Activated T-helper 1 cell treated with anti-CD3 and anti-CD28 coated beads, Interleukin-12 subunit alpha, Interleukin-12 subunit beta, Interleukin-2, Interleukin-4 antibody, amounts not matched to agents 30 ng/mL and 10 ng/mL and 1 ng/mL, durations not matched to agents 14 hours and 24 hours and 36 hours (primary cell): ENCODE measurements at regions of chr17 and their contacts with region 1.

Region 1: GRCh38 chr17:50200457-50201275 is 765 bp downstream of the COL1A1 start:
- DNase-seq: peak; percentile 74
- H3K4me3 Mint-ChIP-seq: peak overlapping the region; percentile 77
- H3K27ac Mint-ChIP-seq: peak overlapping the region; percentile 79
- H3K4me1 Mint-ChIP-seq: peaks cover 17% of the 10 kb centered on the region
- H3K27me3 Mint-ChIP-seq: peaks cover 70% of the 10 kb centered on the region

Region 2: DNA sequence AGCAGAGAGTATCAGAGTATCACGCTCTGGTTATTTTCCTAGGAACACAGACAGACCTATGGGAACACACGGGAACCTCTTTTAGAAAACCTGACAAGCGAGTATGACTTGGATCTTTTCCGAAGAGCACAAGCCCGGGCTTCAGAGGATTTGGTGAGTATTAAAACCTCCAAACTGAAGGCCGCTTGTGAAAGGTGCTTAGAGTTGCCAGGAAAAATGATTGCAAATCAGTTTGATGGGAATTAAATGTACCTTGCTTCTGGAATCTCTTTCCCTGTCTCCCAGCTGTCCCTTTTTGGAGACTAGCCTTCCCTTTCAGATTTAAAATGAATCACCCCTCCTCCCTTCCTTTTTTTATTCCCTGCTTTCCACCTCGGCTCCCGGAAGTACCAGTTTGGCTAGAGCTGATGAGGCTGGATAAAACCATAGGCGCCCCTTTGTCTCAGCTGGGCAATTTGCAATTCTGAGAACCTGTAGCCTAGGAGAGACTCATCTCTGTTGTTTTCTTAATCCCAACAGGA is 384.8 kb before region 1 on chr17:
- intact Hi-C with region 1: no loop called
- DNase-seq: no peak
- H3K4me3 Mint-ChIP-seq: no peak overlapping the region
- H3K27ac Mint-ChIP-seq: peak overlapping the region; percentile 44
- H3K4me1 Mint-ChIP-seq: peaks cover 58% of the 10 kb centered on the region
- H3K27me3 Mint-ChIP-seq: no peaks in the 10 kb centered on the region

Region 3: DNA sequence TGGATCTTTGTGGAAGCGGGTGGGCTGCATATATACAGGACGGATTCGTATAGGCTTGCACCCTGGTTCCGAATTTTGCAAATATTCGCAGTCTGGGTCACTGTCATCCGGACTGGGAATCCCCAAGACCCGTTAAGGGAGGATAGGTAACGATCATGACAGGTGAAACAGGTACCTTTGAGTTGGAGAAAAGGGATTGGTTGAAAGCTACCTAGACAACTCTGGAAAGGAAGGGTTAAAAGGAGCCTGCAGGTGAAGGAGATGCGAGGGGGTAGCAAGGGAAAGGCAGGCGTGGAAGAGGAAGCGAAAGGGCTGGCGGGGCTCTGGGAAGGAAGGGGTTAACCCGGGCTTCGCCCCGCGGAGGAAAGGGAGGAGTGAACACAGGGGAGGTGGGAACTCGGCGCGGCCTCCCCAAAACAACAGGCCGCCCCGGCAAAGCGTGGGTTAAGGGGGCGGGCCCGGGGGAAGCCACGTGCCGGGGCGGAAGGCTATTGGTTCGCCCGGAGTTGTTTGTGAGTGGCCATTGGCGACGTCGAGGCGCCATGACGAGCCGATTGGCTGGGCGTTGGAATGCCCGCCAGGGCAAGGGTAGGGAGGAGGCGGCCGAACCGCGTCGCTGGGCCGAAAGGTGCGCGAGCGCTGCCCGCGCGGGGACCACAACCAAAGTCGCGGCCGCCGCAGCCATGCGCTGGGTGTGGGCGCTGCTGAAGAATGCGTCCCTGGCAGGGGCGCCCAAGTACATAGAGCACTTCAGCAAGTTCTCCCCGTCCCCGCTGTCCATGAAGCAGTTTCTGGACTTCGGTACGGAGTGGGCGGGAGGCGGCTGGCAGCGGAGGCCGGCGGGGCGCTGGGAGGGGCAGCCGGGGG is 105.7 kb before region 1 on chr17 and contains the start of gene PDK2:
- intact Hi-C with region 1: loop called (anchors 1 kb)
- DNase-seq: peak; percentile 97
- H3K4me3 Mint-ChIP-seq: peak within 1 kb of the TSS; percentile 85
- H3K27ac Mint-ChIP-seq: peak within 1 kb of the TSS; percentile 88
- H3K4me1 Mint-ChIP-seq: peaks cover 23% of the 10 kb centered on the region
- H3K27me3 Mint-ChIP-seq: peaks cover 2% of the 10 kb centered on the region
- total RNA-seq, gene PDK2: 13.7 and 16.9 TPM in 2 replicates

Region 4: GRCh38 chr17:50139950-50140871 is 60.5 kb before region 1 on chr17:
- intact Hi-C with region 1: loop called (anchors 2 kb)
- DNase-seq: peak; percentile 74
- H3K4me3 Mint-ChIP-seq: peak overlapping the region; percentile 72
- H3K27ac Mint-ChIP-seq: peak overlapping the region; percentile 79
- H3K4me1 Mint-ChIP-seq: peaks cover 80% of the 10 kb centered on the region
- H3K27me3 Mint-ChIP-seq: no peaks in the 10 kb centered on the region

Region 5: DNA sequence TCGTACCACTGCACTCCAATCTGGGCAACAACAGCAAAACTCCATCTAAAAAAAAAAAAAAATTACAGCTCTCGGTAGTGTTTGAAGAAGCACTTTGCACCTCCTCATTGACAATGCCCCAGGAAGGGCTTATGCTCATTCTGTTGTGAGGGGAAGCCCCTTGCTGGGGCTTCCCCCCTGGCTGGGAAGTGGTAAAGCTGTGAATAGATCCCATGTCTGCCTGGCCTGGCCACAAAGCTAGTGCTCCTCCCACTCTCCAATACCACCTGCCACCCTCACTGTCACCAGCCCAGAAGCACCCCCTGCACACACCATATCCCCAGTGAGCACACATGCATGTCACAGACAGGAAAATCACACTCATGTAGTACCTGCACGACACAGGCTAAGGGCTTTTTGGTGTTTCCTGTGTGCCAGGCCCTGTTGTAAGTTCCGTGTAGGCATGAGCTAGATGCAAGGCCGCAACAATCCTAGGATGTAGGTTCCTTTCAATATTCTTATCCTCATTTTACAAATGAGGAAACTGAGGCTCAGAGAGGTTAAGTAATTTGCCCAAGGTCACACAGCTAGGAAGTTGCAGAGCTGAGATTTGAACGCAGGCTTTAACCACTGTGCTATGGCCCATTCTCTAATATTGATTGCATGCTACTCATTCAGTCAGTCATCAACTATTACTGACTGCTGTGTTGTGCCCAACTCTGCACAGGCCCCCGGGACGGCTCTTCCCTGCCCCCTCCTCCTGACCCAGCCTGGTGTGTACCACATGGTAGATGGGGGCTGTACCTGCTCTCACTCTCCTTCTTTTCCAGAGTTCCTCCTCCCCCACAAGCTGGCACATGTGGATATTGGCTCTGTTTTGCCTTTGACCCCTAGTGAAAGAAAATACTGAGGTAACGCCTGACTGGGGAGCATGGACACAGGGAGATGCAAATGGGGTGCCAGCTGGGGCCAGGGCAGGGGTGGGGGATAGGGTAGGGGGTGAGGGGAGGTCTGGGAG is 12.7 kb after region 1 on chr17:
- intact Hi-C with region 1: no loop called
- DNase-seq: peak; percentile 21
- H3K4me3 Mint-ChIP-seq: no peak overlapping the region
- H3K27ac Mint-ChIP-seq: no peak overlapping the region
- H3K4me1 Mint-ChIP-seq: peaks cover 12% of the 10 kb centered on the region
- H3K27me3 Mint-ChIP-seq: peaks cover 34% of the 10 kb centered on the region

Region 6: DNA sequence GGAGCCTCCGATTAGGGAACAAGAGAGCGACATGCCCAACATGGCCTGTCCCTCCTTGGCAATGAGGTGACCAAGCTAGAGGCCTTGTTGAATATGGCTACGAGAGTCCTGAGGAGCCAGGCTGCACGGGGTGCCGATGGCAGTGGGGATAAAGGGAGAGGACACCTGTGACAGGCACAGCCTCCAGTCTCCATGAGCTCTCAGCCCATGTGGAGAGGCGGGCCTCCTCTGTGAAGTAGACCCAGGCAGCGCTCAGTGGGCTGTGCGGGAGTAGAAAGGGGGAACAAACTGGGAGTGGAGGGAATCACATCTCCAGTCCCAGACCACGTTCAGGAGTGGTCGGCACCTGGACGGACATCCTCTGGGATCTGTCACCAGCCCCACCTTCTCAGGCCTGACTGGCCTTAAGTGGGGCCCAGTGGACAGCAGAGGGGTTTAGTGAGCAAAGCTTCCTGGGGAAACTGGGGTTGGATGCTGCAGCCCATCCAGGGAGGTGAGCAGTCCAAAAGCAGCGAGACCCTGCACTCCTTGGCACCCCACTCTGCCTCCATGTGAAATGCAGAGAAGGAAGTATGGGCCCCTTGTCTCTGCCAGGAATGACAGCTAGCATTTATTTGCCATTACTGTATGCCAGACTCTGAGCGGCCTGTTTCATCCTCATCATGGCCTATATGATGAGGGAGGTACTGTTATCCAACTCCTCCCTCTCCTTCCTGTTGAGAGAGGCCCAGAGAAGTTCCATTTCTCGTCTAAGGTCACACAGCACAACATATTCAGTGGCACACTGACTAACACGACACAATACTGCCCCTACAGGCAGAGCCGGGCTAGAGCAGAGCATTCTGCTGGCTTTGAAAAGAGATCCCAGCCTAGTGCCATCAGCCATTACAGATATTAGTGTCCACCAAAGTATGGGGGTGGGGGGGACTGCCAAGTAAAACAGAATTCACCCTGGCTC is 69.1 kb after region 1 on chr17:
- intact Hi-C with region 1: loop called (anchors 1 kb)
- DNase-seq: peak; percentile 62
- H3K4me3 Mint-ChIP-seq: no peak overlapping the region
- H3K27ac Mint-ChIP-seq: no peak overlapping the region
- H3K4me1 Mint-ChIP-seq: peaks cover 13% of the 10 kb centered on the region
- H3K27me3 Mint-ChIP-seq: peaks cover 13% of the 10 kb centered on the region

Region 7: DNA sequence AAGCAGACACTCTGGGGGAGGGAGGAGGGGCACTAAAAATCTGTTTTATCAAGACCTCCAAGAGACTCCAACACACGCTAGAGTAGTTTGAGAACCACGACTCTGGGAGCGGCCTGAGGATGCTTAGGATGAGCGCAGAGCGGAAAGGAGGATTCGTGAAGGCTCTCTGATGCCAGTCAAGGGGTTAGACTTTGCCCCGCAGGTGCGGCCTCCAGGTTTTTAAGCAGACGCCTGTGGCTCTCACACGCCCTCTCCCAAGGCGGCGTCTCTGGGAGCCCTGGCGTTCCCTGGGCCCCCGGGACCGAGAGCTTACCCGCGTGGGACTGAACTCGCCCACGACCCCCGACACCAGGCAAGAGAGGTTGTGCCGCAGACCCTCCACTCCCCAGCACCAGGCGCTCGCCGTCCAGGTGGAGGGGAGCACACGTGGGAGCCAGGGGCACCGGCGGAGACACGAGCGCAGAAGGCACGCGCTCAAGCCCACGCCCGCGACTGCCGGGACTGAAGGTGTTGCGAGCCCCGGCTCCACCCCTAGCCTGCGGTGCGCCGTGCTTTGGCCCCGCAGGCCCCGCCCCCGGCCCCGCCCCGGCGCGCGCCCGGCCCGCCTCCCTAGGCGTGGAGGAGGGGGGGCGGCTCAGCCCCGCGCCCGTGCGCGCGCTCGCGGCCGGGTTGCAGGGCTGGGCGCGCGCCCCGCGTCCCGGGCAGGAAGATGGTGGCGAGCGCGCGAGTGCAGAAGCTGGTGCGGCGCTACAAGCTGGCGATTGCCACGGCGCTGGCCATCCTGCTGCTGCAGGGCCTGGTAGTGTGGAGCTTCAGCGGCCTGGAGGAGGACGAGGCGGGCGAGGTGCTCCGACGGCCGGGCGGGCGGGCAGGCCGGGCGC is 145.0 kb after region 1 on chr17 and contains the start of gene XYLT2:
- intact Hi-C with region 1: loop called (anchors 1 kb)
- DNase-seq: peak; percentile 87
- H3K4me3 Mint-ChIP-seq: peak within 1 kb of the TSS; percentile 94
- H3K27ac Mint-ChIP-seq: peak within 1 kb of the TSS; percentile 95
- H3K4me1 Mint-ChIP-seq: peaks cover 39% of the 10 kb centered on the region
- H3K27me3 Mint-ChIP-seq: peaks cover 4% of the 10 kb centered on the region
- total RNA-seq, gene XYLT2: 63.0 and 63.9 TPM in 2 replicates